WTC11 (cell line): ENCODE measurements at regions of chr5 and their contacts with region 1.

Region 1: DNA sequence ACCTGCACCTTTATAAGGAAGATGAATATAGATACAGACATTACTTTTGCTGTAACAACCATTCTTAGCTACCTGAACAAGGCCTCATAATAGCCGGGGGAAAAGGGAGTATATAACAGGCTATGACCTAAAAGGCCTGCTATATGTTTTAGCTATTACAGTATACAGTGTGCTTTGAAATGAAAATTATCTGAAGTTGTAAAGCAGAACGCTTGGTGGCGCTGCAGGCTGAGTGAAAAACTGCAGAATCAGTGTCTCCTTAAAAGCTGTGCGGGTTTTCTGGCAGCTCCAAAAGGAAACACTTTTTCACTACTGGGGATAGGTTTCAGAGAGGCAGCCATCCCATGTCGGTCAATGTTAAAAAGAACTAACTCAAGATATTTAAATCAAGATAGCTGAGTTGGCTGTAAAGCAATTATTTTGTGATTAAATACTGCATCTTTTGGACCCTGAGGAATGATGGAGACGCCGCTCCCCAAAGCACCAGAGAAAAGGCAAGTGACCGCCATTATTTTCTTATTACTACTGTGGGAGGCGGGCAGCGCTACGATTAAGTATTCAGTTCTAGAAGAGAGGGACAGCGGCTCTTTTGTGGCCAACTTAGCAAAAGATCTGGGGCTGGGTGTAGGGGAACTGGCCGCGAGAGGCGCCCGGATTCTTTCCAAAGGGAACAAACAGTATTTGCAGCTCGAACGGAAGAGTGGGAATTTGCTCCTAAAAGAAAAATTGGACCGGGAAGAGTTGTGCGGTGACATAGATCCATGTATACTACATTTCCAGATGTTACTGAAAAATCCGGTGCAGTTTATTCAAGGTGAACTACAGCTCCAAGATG is 5.9 kb downstream of the PCDHB6 start:
- DNase-seq: peak; percentile 61
- ATAC-seq: peak; percentile 84
- H3K4me3 Mint-ChIP-seq: peak overlapping the region; percentile 49
- H3K27ac Mint-ChIP-seq: no peak overlapping the region
- H3K4me1 Mint-ChIP-seq: 0 out of 2 replicates have a peak, but pooled peaks cover 5% of the 10 kb centered on the region
- H3K27me3 Mint-ChIP-seq: no peaks in the 10 kb centered on the region
- CTCF ChIP-seq: peak; percentile 55

Region 2: GRCh38 chr5:141127305-141127704 is 28.5 kb before region 1 on chr5:
- CTCF ChIA-PET with region 1: interaction called, 36 read pairs
- POLR2A ChIA-PET with region 1: no interaction called
- DNase-seq: no peak
- ATAC-seq: peak; percentile 60
- H3K4me3 Mint-ChIP-seq: no peak overlapping the region
- H3K27ac Mint-ChIP-seq: 0 out of 2 replicates have a peak overlapping the region, but pooled peaks have one; percentile 24
- H3K4me1 Mint-ChIP-seq: peaks cover 10% of the 10 kb centered on the region
- H3K27me3 Mint-ChIP-seq: no peaks in the 10 kb centered on the region
- CTCF ChIP-seq: no peak

Region 3: DNA sequence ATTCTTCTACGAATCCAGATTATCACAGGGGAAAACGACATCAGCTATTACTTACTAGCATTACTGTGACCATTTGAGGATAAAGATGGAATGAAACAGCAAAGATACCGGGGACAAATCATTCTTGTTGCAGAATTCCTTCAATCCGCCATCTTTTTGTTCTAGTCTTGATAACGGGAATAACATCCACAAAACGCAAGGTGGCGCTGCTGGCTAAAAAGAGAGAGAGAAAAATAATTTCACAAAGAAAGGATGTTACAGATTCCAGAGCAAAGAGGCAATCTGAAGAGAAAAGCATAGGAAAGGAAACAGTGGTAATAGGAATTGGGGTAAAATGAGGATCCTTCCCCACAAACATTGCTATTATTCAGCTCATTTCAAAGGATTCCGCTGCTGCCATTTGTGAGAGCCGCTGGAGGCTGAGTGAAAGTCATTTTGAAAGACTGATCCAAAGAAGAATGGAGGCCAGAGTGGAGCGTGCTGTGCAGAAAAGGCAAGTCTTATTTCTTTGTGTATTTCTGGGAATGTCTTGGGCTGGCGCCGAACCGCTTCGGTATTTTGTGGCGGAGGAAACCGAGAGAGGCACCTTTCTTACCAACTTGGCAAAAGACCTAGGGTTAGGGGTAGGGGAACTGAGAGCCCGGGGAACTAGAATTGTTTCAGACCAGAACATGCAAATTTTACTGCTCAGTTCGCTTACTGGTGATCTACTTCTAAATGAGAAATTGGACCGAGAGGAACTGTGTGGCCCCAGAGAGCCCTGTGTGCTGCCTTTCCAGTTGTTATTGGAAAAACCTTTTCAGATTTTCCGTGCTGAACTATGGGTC is 16.8 kb after region 1 on chr5 and contains the start of gene PCDHB7:
- CTCF ChIA-PET with region 1: interaction called, 22 read pairs
- POLR2A ChIA-PET with region 1: no interaction called
- DNase-seq: peak; percentile 57
- ATAC-seq: no peak
- H3K4me3 Mint-ChIP-seq: no peak within 1 kb of the TSS
- H3K27ac Mint-ChIP-seq: no peak within 1 kb of the TSS
- H3K4me1 Mint-ChIP-seq: no peaks in the 10 kb centered on the region
- H3K27me3 Mint-ChIP-seq: peaks cover 3% of the 10 kb centered on the region; the same call in 1 of the 2 replicates
- CTCF ChIP-seq: peak; percentile 66
- total RNA-seq, gene PCDHB7: 0.17 to 0.27 TPM (median 0.23 TPM) in 3 replicates

Region 4: DNA sequence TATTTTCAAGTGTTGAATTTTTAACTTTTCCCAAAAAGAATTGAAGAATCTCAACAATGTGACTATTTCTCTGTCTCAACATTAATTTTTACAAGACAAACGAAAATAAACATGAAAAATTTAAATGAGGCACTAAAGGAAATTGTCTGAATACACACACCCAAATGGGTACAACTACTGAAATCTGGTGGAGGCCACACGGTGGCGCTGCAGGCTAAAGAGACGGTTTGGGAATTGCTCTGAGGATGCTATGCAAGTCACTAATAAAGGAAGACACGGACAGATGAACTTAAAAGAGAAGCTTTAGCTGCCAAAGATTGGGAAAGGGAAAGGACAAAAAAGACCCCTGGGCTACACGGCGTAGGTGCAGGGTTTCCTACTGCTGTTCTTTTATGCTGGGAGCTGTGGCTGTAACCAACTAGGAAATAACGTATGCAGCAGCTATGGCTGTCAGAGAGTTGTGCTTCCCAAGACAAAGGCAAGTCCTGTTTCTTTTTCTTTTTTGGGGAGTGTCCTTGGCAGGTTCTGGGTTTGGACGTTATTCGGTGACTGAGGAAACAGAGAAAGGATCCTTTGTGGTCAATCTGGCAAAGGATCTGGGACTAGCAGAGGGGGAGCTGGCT is 36.5 kb after region 1 on chr5 and contains the start of gene PCDHB10:
- CTCF ChIA-PET with region 1: interaction called, 35 read pairs
- POLR2A ChIA-PET with region 1: no interaction called
- DNase-seq: peak; percentile 89
- ATAC-seq: peak; percentile 88
- H3K4me3 Mint-ChIP-seq: peak within 1 kb of the TSS; percentile 58
- H3K27ac Mint-ChIP-seq: no peak within 1 kb of the TSS
- H3K4me1 Mint-ChIP-seq: peaks cover 4% of the 10 kb centered on the region
- H3K27me3 Mint-ChIP-seq: peaks cover 4% of the 10 kb centered on the region
- CTCF ChIP-seq: peak; percentile 70; the same call in 1 of the 2 replicates
- total RNA-seq, gene PCDHB10: 1.4 to 1.9 TPM (median 1.7 TPM) in 3 replicates

Region 5: GRCh38 chr5:141208478-141208877 is 52.7 kb after region 1 on chr5 and contains the start of gene PCDHB12:
- CTCF ChIA-PET with region 1: interaction called, 13 read pairs
- POLR2A ChIA-PET with region 1: no interaction called
- DNase-seq: peak; percentile 54
- ATAC-seq: peak; percentile 73
- H3K4me3 Mint-ChIP-seq: peak within 1 kb of the TSS; percentile 72
- H3K27ac Mint-ChIP-seq: no peak within 1 kb of the TSS
- H3K4me1 Mint-ChIP-seq: peaks cover 4% of the 10 kb centered on the region
- H3K27me3 Mint-ChIP-seq: peaks cover 3% of the 10 kb centered on the region
- CTCF ChIP-seq: 0 out of 2 replicates have a peak, but pooled peaks have one; percentile 27
- total RNA-seq, gene PCDHB12: 2.7 to 3.1 TPM (median 3.1 TPM) in 3 replicates